A549 (cell line): ENCODE measurements at regions of chr2 and their contacts with region 1.

Region 1: DNA sequence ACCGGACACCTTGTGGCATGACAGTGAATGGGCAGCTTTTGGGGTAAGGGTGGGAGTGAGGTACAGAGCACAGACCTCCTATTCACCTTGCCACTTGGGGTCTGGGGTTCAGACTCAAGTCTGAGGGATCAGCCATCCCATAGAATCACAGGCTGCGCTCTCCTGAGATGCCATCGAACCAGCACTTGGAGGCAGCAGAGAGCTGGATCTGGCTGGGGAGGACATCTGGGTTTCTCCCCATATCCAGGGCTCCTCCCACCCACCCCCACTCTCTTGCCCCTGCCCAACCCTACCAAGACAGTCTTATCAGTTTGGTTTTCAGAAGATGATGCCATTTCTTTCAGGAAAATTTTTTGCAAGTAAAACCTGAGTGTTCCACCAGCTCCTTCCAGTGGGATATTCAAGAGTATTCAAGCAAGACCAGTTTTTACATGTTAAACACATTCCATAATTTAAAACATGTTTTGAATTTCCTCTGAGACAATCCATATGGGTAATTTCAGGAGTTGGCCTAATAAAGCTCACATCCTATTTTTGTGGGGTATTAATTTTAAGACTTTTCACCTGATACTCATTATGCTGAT is 29.2 kb upstream of the TEX44 start:
- DNase-seq: peak; percentile 64 to 75
- ATAC-seq: peak; percentile 96 to 98
- H3K4me3 ChIP-seq: no peak overlapping the region
- H3K27ac ChIP-seq: no peak overlapping the region
- H3K4me1 ChIP-seq: no peaks in the 10 kb centered on the region
- CTCF ChIP-seq: peak; percentile 75
- EP300 ChIP-seq: no peak
- POLR2A ChIP-seq: no peak
- RAD21 ChIP-seq: peak; percentile 74 to 77

Region 2: DNA sequence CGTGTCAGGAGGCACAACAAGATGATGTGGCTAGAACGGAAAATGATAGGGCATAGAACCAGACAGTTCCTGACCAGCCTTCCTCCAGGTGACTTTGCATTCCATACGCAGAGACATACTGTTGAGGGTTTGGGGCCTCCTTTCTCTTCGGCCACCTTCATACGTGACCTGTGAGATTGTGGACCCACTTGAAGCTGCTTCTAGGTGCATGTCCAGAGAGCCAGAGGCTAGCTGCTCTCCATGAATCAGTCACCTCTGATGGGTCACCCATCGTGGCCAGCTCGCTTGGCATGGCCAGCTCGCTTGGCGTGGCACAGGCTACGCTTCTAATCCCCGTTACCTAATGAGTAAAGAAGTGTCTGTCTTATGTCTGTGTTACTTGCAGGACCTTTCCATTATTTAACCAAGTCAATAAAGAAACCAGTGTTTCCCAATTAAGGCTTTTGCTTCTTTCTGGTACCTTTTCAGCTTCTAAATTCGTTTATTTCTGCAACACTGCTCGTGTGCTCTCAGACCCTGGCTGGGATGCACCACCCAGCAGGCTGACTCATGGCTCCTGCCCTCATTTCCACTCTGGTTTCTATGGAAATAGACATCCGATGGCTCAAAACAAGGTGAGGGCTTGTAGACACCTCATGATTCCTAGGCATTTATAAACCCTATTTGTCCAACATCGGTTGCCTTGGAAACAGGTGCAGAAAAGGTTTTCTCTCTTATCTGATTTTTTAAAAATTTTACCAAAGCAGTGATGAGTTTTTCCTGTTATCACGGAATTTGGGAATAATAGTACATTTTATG is 254.6 kb before region 1 on chr2:
- CTCF ChIA-PET with region 1: no interaction called
- POLR2A ChIA-PET with region 1: no interaction called
- DNase-seq: peak; percentile 43 to 80
- ATAC-seq: peak; percentile 85 to 87
- H3K4me3 ChIP-seq: no peak overlapping the region
- H3K27ac ChIP-seq: peak overlapping the region; percentile 7 to 12; a peak in 1 of 6 replicates
- H3K4me1 ChIP-seq: peaks cover 14% of the 10 kb centered on the region; the same call in 2 of the 3 replicates
- CTCF ChIP-seq: no peak
- EP300 ChIP-seq: no peak
- POLR2A ChIP-seq: no peak
- RAD21 ChIP-seq: no peak

Region 3: GRCh38 chr2:231573698-231574421 is 10.4 kb after region 1 on chr2:
- CTCF ChIA-PET with region 1: interaction called, 11 read pairs
- POLR2A ChIA-PET with region 1: no interaction called
- DNase-seq: no peak
- ATAC-seq: peak; percentile 56 to 74; a peak in 4 of 6 replicates
- H3K4me3 ChIP-seq: no peak overlapping the region
- H3K27ac ChIP-seq: no peak overlapping the region
- H3K4me1 ChIP-seq: no peaks in the 10 kb centered on the region
- CTCF ChIP-seq: no peak
- EP300 ChIP-seq: no peak
- POLR2A ChIP-seq: no peak
- RAD21 ChIP-seq: no peak

Region 4: GRCh38 chr2:231627384-231628120 is 64.1 kb after region 1 on chr2:
- CTCF ChIA-PET with region 1: no interaction called
- POLR2A ChIA-PET with region 1: no interaction called
- DNase-seq: no peak
- ATAC-seq: no peak
- H3K4me3 ChIP-seq: no peak overlapping the region
- H3K27ac ChIP-seq: 0 out of 6 replicates have a peak overlapping the region, but pooled peaks of 1 of the 2 experiments have one; percentile 18
- H3K4me1 ChIP-seq: peaks cover 9% of the 10 kb centered on the region
- CTCF ChIP-seq: no peak
- EP300 ChIP-seq: no peak
- POLR2A ChIP-seq: no peak
- RAD21 ChIP-seq: no peak